Heart right ventricle (tissue), 16 donors: ENCODE measurements at regions of chr1 and their contacts with region 1.

Region 1: DNA sequence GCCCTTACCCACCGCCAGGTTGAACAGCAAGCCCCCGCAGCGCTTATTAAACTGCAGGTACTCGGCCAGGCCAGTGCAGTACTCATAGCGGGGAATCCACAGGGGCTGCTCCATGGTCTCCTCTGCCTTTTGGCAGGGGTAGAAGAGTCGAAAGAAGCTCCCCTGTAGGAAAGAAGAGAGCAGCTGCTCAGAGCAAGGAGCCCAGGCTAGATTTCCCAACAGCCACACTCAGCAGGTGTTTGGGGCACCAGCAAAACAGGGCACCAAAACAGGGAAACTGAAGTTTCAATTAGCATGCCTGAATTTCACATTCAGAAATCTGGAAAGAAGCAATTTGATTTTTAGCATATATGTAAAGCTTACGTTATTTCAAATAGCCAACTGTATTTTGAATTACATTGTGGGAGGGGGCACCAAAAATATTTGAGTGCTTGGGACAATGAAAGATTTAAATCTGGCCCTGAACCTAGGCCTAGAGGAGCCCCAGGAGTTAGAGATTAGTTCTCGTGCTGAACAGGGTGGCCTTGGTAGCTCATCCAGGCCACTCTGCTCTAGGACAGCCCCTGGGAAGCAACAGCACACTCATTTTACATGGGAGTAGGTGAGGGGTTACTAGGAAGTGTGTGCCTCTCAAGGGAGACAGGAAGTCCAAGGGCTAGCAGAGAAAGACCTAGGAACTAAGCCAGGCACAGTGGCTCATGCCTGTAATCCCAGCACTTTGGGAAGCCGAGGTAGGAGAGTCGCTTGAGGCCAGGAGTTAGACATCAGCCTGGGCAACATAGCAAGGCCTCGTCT is 8.2 kb downstream of the PAFAH2 start:
- DNase-seq: no peak
- ATAC-seq: peak in 4 of 8 donors; percentile 31 to 51 (median 45)
- H3K4me3 ChIP-seq: peak overlapping the region in 1 of 10 donors; percentile 42
- H3K27ac ChIP-seq: peak overlapping the region in 4 of 10 donors; percentile 34 to 75 (median 54)
- H3K4me1 ChIP-seq: peaks cover 2 to 62% (median 27%) of the 10 kb centered on the region in 9 donors
- H3K27me3 ChIP-seq: no peaks in the 10 kb centered on the region
- CTCF ChIP-seq: no peak

Region 2: DNA sequence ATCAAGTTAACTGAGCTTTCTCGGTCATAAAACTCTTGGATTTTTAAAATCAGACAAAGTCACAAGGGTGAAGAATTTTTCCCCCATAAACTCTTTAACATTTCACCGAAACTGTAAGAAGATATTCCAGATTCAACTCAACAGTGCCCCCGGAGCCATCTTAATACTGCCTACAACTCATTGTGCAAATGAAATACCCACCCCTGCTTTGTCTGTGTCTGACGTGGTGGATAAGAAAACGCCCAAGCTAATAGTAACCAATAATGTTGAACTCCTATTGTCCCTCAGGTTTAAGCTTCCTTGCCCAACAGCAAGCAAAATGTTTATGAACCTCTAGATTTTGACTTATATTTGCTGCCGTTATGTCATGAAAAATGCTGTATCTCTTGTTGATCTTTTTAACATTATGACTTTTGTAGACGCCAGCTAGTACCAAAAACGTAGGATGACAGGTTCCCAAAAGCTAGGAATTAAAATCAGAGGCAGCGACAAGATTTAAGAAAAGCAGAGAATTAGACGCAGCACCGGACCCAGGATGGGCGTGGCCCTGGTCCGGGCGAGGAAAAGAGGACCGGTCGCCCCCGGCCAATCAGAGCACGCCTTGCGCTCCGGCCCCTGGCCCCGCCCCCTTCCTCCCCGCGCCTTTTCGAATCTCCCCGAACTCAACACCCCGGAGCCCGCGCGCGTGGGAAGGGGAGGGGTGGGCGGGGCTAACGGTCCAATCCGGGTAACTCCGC is 84.5 kb before region 1 on chr1:
- intact Hi-C with region 1: loop called in 1 of 10 experiments (anchors 5 kb)
- DNase-seq: peak; percentile 95 to 96
- ATAC-seq: peak; percentile 93 to 97 (median 96)
- H3K4me3 ChIP-seq: peak overlapping the region; percentile 53 to 82 (median 70)
- H3K27ac ChIP-seq: peak overlapping the region in 9 of 10 donors; percentile 45 to 77 (median 69)
- H3K4me1 ChIP-seq: peaks cover 9 to 44% (median 28%) of the 10 kb centered on the region in 9 donors
- H3K27me3 ChIP-seq: no peaks in the 10 kb centered on the region
- CTCF ChIP-seq: peak in 1 of 9 donors; percentile 15

Region 3: GRCh38 chr1:25922056-25922969 is 67.3 kb before region 1 on chr1:
- intact Hi-C with region 1: loop called in 1 of 10 experiments (anchors 10 kb)
- DNase-seq: peak; percentile 35 to 54
- ATAC-seq: peak; percentile 60 to 87 (median 68)
- H3K4me3 ChIP-seq: peak overlapping the region; percentile 15 to 69 (median 62)
- H3K27ac ChIP-seq: peak overlapping the region in 9 of 10 donors; percentile 19 to 91 (median 70)
- H3K4me1 ChIP-seq: peaks cover 0 to 39% (median 14%) of the 10 kb centered on the region in 9 donors
- H3K27me3 ChIP-seq: peaks cover 0 to 3% (median 0%) of the 10 kb centered on the region in 7 donors
- CTCF ChIP-seq: peak in 1 of 9 donors; percentile 9

Region 4: GRCh38 chr1:25936947-25937346 is 52.7 kb before region 1 on chr1:
- intact Hi-C with region 1: no loop called
- DNase-seq: no peak
- ATAC-seq: no peak
- H3K4me3 ChIP-seq: no peak overlapping the region
- H3K27ac ChIP-seq: no peak overlapping the region
- H3K4me1 ChIP-seq: peaks cover 0 to 16% (median 3%) of the 10 kb centered on the region in 9 donors
- H3K27me3 ChIP-seq: no peaks in the 10 kb centered on the region
- CTCF ChIP-seq: no peak

Region 5: DNA sequence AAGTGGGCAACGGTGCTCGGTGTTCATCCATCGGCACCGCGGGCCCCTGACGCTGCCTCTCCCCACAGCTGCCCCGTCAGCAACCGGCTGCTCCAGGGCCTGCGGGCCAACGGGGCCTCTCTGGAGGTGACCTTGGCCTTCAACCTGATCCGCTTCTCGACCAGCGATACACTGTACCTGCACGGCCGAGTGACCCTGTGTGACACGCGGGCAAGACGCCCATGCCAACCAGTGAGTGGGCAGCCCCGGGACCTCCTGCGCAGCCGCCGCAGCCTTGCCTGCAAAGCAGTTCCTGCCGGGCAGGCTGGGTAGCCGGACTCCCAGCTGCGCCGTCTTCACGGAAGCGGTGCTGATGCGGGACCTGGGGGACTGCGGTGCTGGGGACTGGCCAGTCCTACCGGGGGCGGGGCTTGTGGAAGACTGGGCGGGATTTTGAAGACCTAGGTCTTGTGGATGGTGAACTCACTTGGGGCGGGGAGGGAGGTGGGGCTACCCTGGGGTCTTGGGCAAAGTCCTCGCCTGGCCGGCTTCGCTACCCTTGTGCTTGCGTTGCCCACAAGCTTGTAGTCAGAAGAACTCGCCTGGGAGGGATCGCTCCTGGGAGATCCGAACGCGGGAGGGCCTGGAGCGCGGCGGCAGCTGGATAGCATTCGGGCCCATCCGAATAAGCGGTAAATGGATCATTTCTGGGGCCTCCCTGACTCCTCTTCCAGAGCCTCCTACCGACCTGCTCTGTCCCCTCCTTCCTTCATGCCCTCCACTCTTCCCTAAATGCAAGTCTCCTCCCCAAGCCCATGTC is 235.6 kb after region 1 on chr1:
- intact Hi-C with region 1: no loop called
- DNase-seq: peak; percentile 65 to 76
- ATAC-seq: peak; percentile 85 to 94 (median 92)
- H3K4me3 ChIP-seq: peak overlapping the region; percentile 36 to 62 (median 55)
- H3K27ac ChIP-seq: peak overlapping the region in 9 of 10 donors; percentile 5 to 71 (median 56)
- H3K4me1 ChIP-seq: peaks cover 0 to 20% (median 12%) of the 10 kb centered on the region in 9 donors
- H3K27me3 ChIP-seq: peaks cover 0 to 28% (median 14%) of the 10 kb centered on the region in 7 donors
- CTCF ChIP-seq: no peak